ENCODE measurements at regions of chr15 and their contacts with region 1.

Region 1: DNA sequence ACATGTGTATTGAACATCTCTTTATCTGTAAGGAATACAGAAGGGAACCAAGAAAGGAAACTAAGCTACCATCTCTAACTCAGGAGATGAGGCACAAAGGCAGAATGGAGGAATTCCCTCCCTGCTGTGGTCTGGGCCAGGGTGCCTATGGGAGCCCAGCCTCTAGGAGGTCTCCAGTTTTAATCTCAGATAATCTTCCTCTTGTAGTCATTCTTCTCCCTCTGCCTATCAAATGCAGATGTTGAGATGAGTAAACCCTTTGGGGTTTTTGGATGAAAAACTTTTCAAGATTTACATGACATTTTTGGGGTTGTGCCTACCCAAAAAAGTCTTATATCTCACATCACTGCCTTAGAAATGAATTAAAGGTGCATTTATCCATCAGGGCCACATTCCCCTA is 23.3 kb downstream of the SCG5 start:
- DNase-seq: no peak
- ATAC-seq: no peak
- H3K4me3 ChIP-seq: no peak overlapping the region
- H3K27ac ChIP-seq: peak overlapping the region; percentile 29 to 68; a peak in 1 of 6 replicates
- H3K4me1 ChIP-seq: peaks cover 21% of the 10 kb centered on the region
- CTCF ChIP-seq: no peak
- EP300 ChIP-seq: no peak
- POLR2A ChIP-seq: no peak
- RAD21 ChIP-seq: no peak

Region 2: DNA sequence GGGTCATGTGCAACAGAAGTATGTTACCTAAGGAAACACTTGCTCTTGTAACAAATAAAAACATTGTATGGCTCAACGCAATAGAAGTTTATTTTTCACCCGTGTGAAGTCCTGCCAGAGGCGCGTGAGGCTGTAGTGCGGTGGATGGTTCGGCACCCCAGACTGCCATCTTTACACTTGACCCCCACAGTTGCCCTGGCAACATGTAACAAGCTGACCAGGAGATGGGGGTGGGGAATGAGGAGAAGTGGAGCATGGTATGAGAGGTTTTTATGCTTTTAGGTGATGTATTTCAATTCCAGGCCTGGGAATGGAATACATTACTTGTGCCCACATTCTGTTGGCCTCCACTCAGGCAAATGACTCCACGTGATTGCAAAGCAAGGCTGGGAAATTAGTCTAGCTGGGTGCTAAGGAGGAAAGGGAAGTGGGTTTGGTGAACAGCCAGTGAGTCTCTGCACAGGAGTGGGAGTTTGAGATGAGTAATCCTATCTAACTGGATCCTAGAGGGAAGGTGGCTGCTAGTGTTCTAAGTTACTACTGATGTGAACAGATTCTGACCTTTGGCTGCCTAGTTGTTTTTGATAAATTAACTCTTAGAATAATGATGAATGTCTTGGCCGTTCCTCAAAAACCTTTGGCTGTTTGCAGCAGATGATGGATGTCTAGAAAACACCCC is 19.2 kb after region 1 on chr15:
- CTCF ChIA-PET with region 1: interaction called, 60 read pairs
- POLR2A ChIA-PET with region 1: no interaction called
- DNase-seq: peak in 1 of 2 experiments; percentile 30
- ATAC-seq: peak in 1 of 2 experiments; percentile 23; a peak in 1 of 6 replicates
- H3K4me3 ChIP-seq: no peak overlapping the region
- H3K27ac ChIP-seq: peak overlapping the region; percentile 57 to 61; a peak in 5 of 6 replicates
- H3K4me1 ChIP-seq: peaks cover 54% of the 10 kb centered on the region
- CTCF ChIP-seq: no peak
- EP300 ChIP-seq: no peak
- POLR2A ChIP-seq: no peak
- RAD21 ChIP-seq: no peak

Region 3: GRCh38 chr15:32723171-32723948 is 58.6 kb after region 1 on chr15:
- CTCF ChIA-PET with region 1: interaction called, 23 read pairs
- POLR2A ChIA-PET with region 1: no interaction called
- DNase-seq: no peak
- ATAC-seq: no peak
- H3K4me3 ChIP-seq: no peak overlapping the region
- H3K27ac ChIP-seq: no peak overlapping the region
- H3K4me1 ChIP-seq: 0 out of 3 replicates have a peak, but pooled peaks cover 6% of the 10 kb centered on the region
- CTCF ChIP-seq: no peak
- EP300 ChIP-seq: no peak
- POLR2A ChIP-seq: no peak
- RAD21 ChIP-seq: no peak

Region 4: GRCh38 chr15:32849769-32850668 is 185.2 kb after region 1 on chr15:
- CTCF ChIA-PET with region 1: interaction called, 44 read pairs
- POLR2A ChIA-PET with region 1: no interaction called
- DNase-seq: peak; percentile 59 to 87
- ATAC-seq: peak; percentile 78 to 83
- H3K4me3 ChIP-seq: no peak overlapping the region
- H3K27ac ChIP-seq: peak overlapping the region; percentile 79 to 86
- H3K4me1 ChIP-seq: peaks cover 56% of the 10 kb centered on the region
- CTCF ChIP-seq: no peak
- EP300 ChIP-seq: peak; percentile 96 to 97
- POLR2A ChIP-seq: no peak
- RAD21 ChIP-seq: peak; percentile 14 to 71; a peak in 3 of 5 replicates

Region 5: DNA sequence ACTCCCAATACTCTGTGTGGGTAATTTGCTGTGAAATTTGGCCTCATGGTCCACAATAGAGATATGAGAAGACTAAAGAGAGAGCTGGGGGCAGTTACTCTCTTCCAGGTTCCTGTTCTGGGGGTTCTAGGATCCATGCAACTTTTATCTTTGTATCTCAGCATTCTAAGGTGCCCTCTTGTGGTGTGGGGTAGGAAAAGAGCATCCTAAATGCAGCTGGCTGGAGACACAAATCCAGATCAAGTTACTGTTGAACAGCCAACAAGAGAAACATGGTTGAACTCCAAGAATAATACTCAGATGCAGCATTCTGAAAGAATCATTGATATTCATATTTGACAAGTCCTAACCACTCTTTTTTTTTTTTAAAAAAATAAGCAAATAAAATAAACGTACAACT is 291.2 kb after region 1 on chr15:
- CTCF ChIA-PET with region 1: interaction called, 167 read pairs
- POLR2A ChIA-PET with region 1: no interaction called
- DNase-seq: peak; percentile 55 to 77
- ATAC-seq: peak; percentile 80 to 87; a peak in 5 of 6 replicates
- H3K4me3 ChIP-seq: no peak overlapping the region
- H3K27ac ChIP-seq: peak overlapping the region; percentile 6 to 27; a peak in 2 of 6 replicates
- H3K4me1 ChIP-seq: peaks cover 17% of the 10 kb centered on the region; the same call in 2 of the 3 replicates
- CTCF ChIP-seq: peak; percentile 84
- EP300 ChIP-seq: no peak
- POLR2A ChIP-seq: no peak
- RAD21 ChIP-seq: peak; percentile 90 to 91

Region 6: GRCh38 chr15:32994810-32995424 is 330.1 kb after region 1 on chr15:
- CTCF ChIA-PET with region 1: interaction called, 374 read pairs
- POLR2A ChIA-PET with region 1: interaction called, 3 read pairs
- DNase-seq: peak; percentile 13 to 62
- ATAC-seq: peak; percentile 52 to 82; a peak in 3 of 6 replicates
- H3K4me3 ChIP-seq: no peak overlapping the region
- H3K27ac ChIP-seq: peak overlapping the region in 1 of 2 experiments; percentile 38; a peak in 3 of 6 replicates
- H3K4me1 ChIP-seq: no peaks in the 10 kb centered on the region
- CTCF ChIP-seq: peak; percentile 95
- EP300 ChIP-seq: no peak
- POLR2A ChIP-seq: no peak
- RAD21 ChIP-seq: peak; percentile 89 to 95

Measured in A549 (cell line).